Heart left ventricle (tissue), 16 donors: ENCODE measurements at regions of chr11 and their contacts with region 1.

Region 1: DNA sequence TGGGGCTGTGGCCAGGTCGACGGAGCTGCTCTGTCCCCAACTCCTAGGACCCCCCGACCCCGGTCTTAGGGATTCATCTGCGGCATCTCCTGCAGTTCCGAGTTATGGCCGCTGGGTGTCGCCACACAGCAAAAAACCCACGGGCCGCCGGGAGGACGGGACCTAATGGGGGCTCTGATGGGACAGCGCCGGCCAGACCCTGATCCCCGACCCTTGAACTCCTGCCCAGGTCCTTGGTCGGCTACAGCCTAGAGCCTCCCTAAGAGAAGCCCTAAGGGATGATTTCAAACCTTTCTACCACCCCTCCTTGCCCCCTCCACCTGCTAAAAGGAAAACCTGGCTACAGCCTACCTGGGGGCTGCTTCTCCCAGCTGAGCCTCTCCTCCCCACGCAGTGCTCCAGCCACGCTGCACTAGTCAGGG is 30.8 kb upstream of the LRRC10B start:
- DNase-seq: peak in 4 of 5 donors; percentile 41 to 63 (median 52)
- ATAC-seq: peak in 3 of 4 donors; percentile 27 to 44 (median 32)
- H3K4me3 ChIP-seq: no peak overlapping the region
- H3K27ac ChIP-seq: peak overlapping the region in 5 of 12 donors; percentile 7 to 58 (median 34)
- H3K4me1 ChIP-seq: peaks cover 0 to 40% (median 13%) of the 10 kb centered on the region in 12 donors
- H3K27me3 ChIP-seq: no peaks in the 10 kb centered on the region
- CTCF ChIP-seq: peak; percentile 89 to 96 (median 93)
- POLR2A ChIP-seq: no peak

Region 2: GRCh38 chr11:61446211-61446651 is 31.5 kb before region 1 on chr11:
- intact Hi-C with region 1: loop called in 1 of 10 experiments (anchors 2 kb)
- DNase-seq: peak; percentile 83 to 95 (median 91)
- ATAC-seq: peak; percentile 57 to 85 (median 82)
- H3K4me3 ChIP-seq: no peak overlapping the region
- H3K27ac ChIP-seq: peak overlapping the region in 11 of 12 donors; percentile 3 to 90 (median 78)
- H3K4me1 ChIP-seq: peaks cover 7 to 41% (median 23%) of the 10 kb centered on the region in 12 donors
- H3K27me3 ChIP-seq: no peaks in the 10 kb centered on the region
- CTCF ChIP-seq: peak; percentile 64 to 94 (median 81)
- POLR2A ChIP-seq: no peak

Region 3: GRCh38 chr11:61516675-61517572 is 39.2 kb after region 1 on chr11:
- intact Hi-C with region 1: loop called in 9 of 10 experiments (anchors 1 to 5 kb)
- DNase-seq: no peak
- ATAC-seq: peak in 2 of 4 donors; percentile 31 to 40
- H3K4me3 ChIP-seq: peak overlapping the region in 2 of 12 donors; percentile 1 to 23
- H3K27ac ChIP-seq: peak overlapping the region in 3 of 12 donors; percentile 18 to 31 (median 19)
- H3K4me1 ChIP-seq: peaks cover 0 to 8% (median 1%) of the 10 kb centered on the region in 12 donors
- H3K27me3 ChIP-seq: peaks cover 0 to 7% (median 0%) of the 10 kb centered on the region in 9 donors
- CTCF ChIP-seq: peak; percentile 92 to 97 (median 96)
- POLR2A ChIP-seq: no peak

Region 4: GRCh38 chr11:61581030-61581928 is 103.5 kb after region 1 on chr11 and contains the start of gene SYT7:
- intact Hi-C with region 1: loop called in 6 of 10 experiments (anchors 2 to 10 kb)
- DNase-seq: peak; percentile 95 to 97 (median 96)
- ATAC-seq: peak; percentile 70 to 84 (median 84)
- H3K4me3 ChIP-seq: peak within 1 kb of the TSS; percentile 44 to 83 (median 62)
- H3K27ac ChIP-seq: peak within 1 kb of the TSS; percentile 26 to 92 (median 78)
- H3K4me1 ChIP-seq: peaks cover 0 to 36% (median 14%) of the 10 kb centered on the region in 12 donors
- H3K27me3 ChIP-seq: peaks cover 0 to 36% (median 2%) of the 10 kb centered on the region in 9 donors
- CTCF ChIP-seq: peak in 5 of 12 donors; percentile 3 to 17 (median 9)
- POLR2A ChIP-seq: peak in 1 of 2 donors; percentile 49
- total RNA-seq, gene SYT7: 12.4 to 22.7 (median 17.4) TPM

Region 5: GRCh38 chr11:61639816-61640443 is 162.2 kb after region 1 on chr11:
- intact Hi-C with region 1: loop called in 7 of 10 experiments (anchors 1 to 5 kb)
- DNase-seq: no peak
- ATAC-seq: no peak
- H3K4me3 ChIP-seq: no peak overlapping the region
- H3K27ac ChIP-seq: no peak overlapping the region
- H3K4me1 ChIP-seq: peaks cover 0 to 6% (median 0%) of the 10 kb centered on the region in 12 donors
- H3K27me3 ChIP-seq: peaks cover 0 to 3% (median 0%) of the 10 kb centered on the region in 9 donors
- CTCF ChIP-seq: no peak
- POLR2A ChIP-seq: no peak